Activated CD4-positive, alpha-beta T cell treated with anti-CD3 and anti-CD28 coated beads, Interleukin-2, amount 10 ng/mL, durations not matched to agents 7 days and 5 days (primary cell): ENCODE measurements at regions of chr10 and their contacts with region 1.

Region 1: GRCh38 chr10:124719213-124719851 is 24.8 kb downstream of the FAM53B start:
- DNase-seq: peak; percentile 80
- H3K4me3 Mint-ChIP-seq: peak overlapping the region; percentile 30
- H3K27ac Mint-ChIP-seq: peak overlapping the region; percentile 96
- H3K4me1 Mint-ChIP-seq: peaks cover 91% of the 10 kb centered on the region
- H3K27me3 Mint-ChIP-seq: no peaks in the 10 kb centered on the region

Region 2: DNA sequence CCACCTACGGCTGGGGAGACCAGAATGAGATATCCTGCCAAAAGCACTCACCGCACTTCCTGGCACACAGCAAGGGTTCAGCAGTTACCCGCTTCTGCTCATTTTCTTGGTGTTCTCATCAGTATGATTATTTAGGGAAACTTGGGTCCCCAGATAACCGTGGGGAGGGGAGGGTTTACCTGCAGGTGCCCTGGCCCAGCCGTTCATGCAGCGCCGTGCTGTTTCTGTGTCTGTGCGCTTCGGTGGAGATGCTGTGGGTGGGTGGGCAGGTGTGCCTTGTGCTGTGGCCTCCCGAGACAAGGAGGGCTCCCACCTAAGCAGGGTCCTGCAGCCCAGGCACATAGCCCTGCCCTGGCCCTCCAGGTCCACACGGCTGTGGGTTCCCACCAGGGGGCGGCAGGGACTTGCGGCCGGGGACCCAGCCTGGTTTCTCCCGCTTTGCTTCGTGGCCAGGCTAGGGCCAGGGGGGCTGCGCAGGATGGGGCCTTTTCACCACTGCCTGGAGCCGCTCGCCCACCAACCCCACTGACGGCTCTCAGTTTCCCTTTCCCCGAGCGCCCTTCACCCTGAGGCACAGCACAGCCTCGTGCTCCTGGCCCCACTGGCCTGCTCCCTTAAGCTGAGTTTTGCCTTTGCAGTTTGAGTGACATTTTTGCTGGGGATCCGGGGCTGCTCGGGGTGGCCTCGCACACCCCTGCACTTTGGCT is 179.2 kb before region 1 on chr10:
- CTCF ChIA-PET with region 1: no interaction called
- POLR2A ChIA-PET with region 1: no interaction called
- DNase-seq: peak; percentile 63
- H3K4me3 Mint-ChIP-seq: no peak overlapping the region
- H3K27ac Mint-ChIP-seq: no peak overlapping the region
- H3K4me1 Mint-ChIP-seq: peaks cover 6% of the 10 kb centered on the region
- H3K27me3 Mint-ChIP-seq: no peaks in the 10 kb centered on the region

Region 3: GRCh38 chr10:124618470-124619073 is 100.8 kb before region 1 on chr10:
- CTCF ChIA-PET with region 1: no interaction called
- POLR2A ChIA-PET with region 1: no interaction called
- DNase-seq: no peak
- H3K4me3 Mint-ChIP-seq: no peak overlapping the region
- H3K27ac Mint-ChIP-seq: peak overlapping the region; percentile 64
- H3K4me1 Mint-ChIP-seq: peaks cover 21% of the 10 kb centered on the region
- H3K27me3 Mint-ChIP-seq: no peaks in the 10 kb centered on the region

Region 4: GRCh38 chr10:124697830-124698544 is 21.3 kb before region 1 on chr10:
- CTCF ChIA-PET with region 1: interaction called, 209 read pairs
- POLR2A ChIA-PET with region 1: no interaction called
- DNase-seq: peak; percentile 43
- H3K4me3 Mint-ChIP-seq: no peak overlapping the region
- H3K27ac Mint-ChIP-seq: peak overlapping the region; percentile 95
- H3K4me1 Mint-ChIP-seq: peaks cover 95% of the 10 kb centered on the region
- H3K27me3 Mint-ChIP-seq: no peaks in the 10 kb centered on the region

Region 5: GRCh38 chr10:124732931-124733570 is 13.7 kb after region 1 on chr10:
- CTCF ChIA-PET with region 1: interaction called, 33 read pairs
- POLR2A ChIA-PET with region 1: interaction called, 6 read pairs
- DNase-seq: peak; percentile 41
- H3K4me3 Mint-ChIP-seq: peak overlapping the region; percentile 25
- H3K27ac Mint-ChIP-seq: peak overlapping the region; percentile 89
- H3K4me1 Mint-ChIP-seq: peaks cover 90% of the 10 kb centered on the region
- H3K27me3 Mint-ChIP-seq: no peaks in the 10 kb centered on the region

Region 6: DNA sequence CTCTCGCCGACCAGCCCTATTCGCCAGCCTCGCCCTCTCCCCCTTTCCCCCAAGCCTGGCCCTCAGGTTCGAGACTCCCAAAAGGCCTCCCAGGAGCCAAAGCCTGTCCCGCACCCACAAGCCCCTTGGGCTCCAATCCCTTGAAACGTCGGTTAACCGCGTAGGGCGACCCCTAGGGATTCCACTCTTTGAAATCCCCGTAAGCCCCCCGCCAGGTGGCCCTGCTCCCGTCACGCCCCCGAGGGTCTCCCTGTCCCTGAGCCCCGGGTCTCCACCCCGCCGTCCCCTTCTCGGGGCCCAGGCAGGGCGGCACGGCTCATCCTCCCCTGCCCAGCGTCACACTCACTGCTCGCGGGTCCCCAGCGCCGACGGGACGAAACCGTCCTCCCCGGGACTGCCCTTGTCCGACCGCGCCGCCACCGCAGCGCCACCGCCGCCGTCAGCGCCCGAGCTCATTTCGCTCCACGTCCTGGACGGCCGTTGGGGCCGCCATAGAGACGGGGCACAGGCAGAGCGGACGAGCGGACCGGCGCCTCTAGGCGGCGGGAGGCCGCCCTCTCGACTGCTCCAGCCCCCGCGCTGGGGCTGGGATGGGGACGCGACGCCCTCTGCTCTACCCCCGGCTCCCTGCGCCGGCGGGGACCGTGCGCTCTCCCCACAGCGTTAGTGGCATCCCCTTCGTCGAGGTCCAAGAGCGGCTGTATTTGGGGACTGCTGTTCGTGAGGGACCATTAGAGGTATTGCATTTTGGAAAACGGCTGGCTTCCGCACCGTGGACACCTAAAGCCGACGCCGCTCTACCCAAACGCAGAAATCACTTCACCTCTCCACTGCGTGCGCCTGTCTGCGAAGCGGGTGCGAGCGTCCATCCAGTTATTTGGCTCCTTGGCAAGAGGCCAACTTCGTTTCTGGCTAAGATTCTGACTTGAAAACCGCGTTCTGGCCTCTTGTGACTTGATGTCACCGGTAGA is 72.3 kb after region 1 on chr10 and contains the start of gene EEF1AKMT2:
- CTCF ChIA-PET with region 1: no interaction called
- POLR2A ChIA-PET with region 1: no interaction called
- DNase-seq: peak; percentile 78
- H3K4me3 Mint-ChIP-seq: peak within 1 kb of the TSS; percentile 92
- H3K27ac Mint-ChIP-seq: peak within 1 kb of the TSS; percentile 93
- H3K4me1 Mint-ChIP-seq: peaks cover 17% of the 10 kb centered on the region
- H3K27me3 Mint-ChIP-seq: peaks cover 8% of the 10 kb centered on the region
- total RNA-seq, gene EEF1AKMT2: 23.5 to 28.3 TPM